ENCODE measurements at regions of chr20 and their contacts with region 1.

Region 1: DNA sequence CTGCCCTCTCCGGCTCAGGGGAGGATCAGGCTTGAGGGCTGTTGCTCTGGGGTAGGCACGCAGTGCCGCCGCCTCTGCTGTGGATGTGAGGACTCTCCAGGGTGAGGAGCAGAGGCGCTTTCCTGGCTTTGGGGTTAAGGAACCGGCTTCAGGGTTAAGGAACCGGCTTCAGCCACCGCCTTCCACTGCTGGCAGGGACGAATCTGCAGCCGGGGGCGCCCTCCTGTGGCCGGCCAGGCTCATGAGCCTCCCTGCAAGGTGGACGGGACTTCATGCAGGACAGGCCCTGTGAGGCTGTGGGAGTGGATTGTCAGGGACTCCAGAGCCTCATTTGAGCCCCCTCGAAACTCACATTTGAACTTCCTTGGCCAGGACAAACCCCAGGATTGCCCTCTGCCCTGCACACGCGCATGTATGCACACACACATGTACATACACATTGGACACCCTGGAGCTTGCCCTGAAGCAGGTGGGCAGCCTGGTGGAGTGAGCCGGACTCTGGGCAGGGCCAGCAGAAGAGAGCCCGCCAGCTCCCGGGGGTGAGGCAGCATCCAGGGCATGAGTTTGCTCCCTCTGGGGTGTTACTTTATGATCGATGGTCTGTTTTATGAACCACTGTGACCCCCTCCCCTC is 146.8 kb downstream of the PHACTR3 start:
- DNase-seq: peak; percentile 69 to 78 (median 74)
- ATAC-seq: peak; percentile 98
- H3K4me3 ChIP-seq: no peak overlapping the region
- H3K27ac ChIP-seq: no peak overlapping the region
- H3K4me1 ChIP-seq: peaks cover 0 to 4% of the 10 kb centered on the region in 2 experiments; a peak in 1 of 5 replicates
- H3K27me3 ChIP-seq: peaks cover 12 to 57% of the 10 kb centered on the region in 2 experiments
- CTCF ChIP-seq: peak; percentile 79 to 84 (median 82)
- EP300 ChIP-seq: no peak
- POLR2A ChIP-seq: no peak
- RAD21 ChIP-seq: peak; percentile 53 to 77

Region 2: DNA sequence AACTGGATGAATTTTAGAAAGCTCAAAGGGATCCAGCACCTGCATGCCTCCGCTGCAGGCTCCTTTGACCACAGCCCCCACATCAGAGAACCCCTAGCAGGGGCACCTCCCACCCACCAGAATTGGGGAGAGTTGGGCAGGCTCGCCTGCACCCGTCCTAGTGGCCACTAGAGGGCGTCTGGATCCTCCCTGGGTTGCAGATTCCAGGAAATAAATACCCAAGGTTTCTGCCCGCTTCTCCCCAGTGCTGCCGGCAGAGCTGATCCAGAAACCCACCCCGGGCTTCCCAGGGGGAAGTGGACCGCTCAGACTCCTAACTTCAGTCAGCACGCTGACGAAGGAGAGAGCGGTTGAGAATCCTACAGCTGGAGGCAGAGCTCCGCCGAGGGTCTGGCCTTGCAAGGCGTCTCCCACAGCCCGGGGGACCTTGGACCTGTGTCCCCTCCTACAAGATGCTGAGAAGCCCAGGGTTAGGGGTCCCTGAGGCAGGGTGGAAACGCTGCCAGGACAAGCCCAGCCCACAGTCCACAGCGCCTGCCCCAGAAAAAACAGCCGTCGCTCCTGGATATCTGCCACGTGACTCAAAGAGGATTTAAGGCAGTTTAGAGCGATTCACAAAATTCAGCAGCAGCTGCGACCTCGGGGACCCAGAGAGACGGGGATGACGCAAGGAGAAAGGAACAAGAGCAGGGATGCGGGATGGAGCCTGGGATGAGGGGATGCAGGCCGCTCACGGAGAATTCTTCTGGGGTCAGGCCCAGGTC is 179.4 kb before region 1 on chr20:
- CTCF ChIA-PET with region 1: interaction called, 8 read pairs
- POLR2A ChIA-PET with region 1: no interaction called
- in situ Hi-C with region 1: no loop called
- intact Hi-C with region 1: loop called (anchors 1 kb)
- DNase-seq: peak; percentile 59 to 83 (median 80)
- ATAC-seq: peak; percentile 92
- H3K4me3 ChIP-seq: no peak overlapping the region
- H3K27ac ChIP-seq: no peak overlapping the region
- H3K4me1 ChIP-seq: peaks cover 0 to 6% of the 10 kb centered on the region in 2 experiments; a peak in 2 of 5 replicates
- H3K27me3 ChIP-seq: peaks cover 4 to 15% of the 10 kb centered on the region in 2 experiments; a peak in 2 of 5 replicates
- CTCF ChIP-seq: peak; percentile 76 to 88 (median 77)
- EP300 ChIP-seq: no peak
- POLR2A ChIP-seq: no peak
- RAD21 ChIP-seq: peak in 1 of 2 experiments; percentile 52; a peak in 2 of 4 replicates

Region 3: GRCh38 chr20:59583428-59584045 is 167.6 kb before region 1 on chr20:
- CTCF ChIA-PET with region 1: no interaction called
- POLR2A ChIA-PET with region 1: no interaction called
- in situ Hi-C with region 1: loop called (anchors 5 kb)
- intact Hi-C with region 1: no loop called
- DNase-seq: no peak
- ATAC-seq: no peak
- H3K4me3 ChIP-seq: no peak overlapping the region
- H3K27ac ChIP-seq: no peak overlapping the region
- H3K4me1 ChIP-seq: no peaks in the 10 kb centered on the region
- H3K27me3 ChIP-seq: peaks cover 7 to 64% of the 10 kb centered on the region in 2 experiments; a peak in 4 of 5 replicates
- CTCF ChIP-seq: no peak
- EP300 ChIP-seq: no peak
- POLR2A ChIP-seq: no peak
- RAD21 ChIP-seq: no peak

Region 4: DNA sequence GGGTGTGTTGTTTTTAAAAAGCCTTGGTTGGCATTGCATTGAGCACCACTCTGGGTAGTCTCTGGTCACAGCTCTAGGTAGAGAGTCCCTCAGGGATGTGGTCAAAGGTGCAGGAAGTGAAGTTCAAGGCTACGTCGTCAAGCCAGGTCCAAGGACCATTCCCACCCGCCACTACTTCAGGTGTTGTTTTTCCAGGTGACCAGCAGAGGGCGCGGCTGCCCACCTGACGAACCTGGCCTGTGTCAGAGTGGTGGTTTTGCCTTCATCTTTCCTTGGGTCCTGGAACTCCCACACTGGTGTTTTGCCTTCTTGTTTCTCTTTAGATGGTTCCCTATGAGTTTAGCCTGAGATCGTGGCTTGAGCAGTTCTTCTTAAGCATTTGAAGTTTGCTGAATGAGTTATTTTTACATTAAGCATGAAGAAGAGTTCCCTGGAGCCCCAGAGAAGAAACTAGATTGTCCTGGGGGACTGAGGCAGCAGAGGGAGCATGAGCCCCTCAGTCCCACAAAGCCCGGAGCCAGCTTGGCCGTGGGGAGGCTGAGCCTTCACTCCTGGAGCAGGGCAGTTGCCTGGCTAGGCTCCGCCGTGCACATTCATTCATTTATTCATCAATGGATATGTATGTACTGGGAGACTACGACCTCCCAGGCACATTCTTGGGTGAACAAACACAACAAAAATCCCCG is 152.4 kb before region 1 on chr20:
- CTCF ChIA-PET with region 1: interaction called, 27 read pairs
- POLR2A ChIA-PET with region 1: no interaction called
- in situ Hi-C with region 1: no loop called
- intact Hi-C with region 1: loop called (anchors 1 kb)
- DNase-seq: peak; percentile 57 to 77 (median 76)
- ATAC-seq: peak; percentile 92
- H3K4me3 ChIP-seq: no peak overlapping the region
- H3K27ac ChIP-seq: no peak overlapping the region
- H3K4me1 ChIP-seq: no peaks in the 10 kb centered on the region
- H3K27me3 ChIP-seq: 0 out of 5 replicates have a peak, but pooled peaks cover 0 to 4% of the 10 kb centered on the region in 2 experiments
- CTCF ChIP-seq: peak; percentile 75 to 92 (median 86)
- EP300 ChIP-seq: no peak
- POLR2A ChIP-seq: no peak
- RAD21 ChIP-seq: peak; percentile 51 to 78; a peak in 3 of 4 replicates

Region 5: GRCh38 chr20:60541991-60542390 is 790.8 kb after region 1 on chr20:
- CTCF ChIA-PET with region 1: no interaction called
- POLR2A ChIA-PET with region 1: no interaction called
- in situ Hi-C with region 1: no loop called
- intact Hi-C with region 1: no loop called
- DNase-seq: no peak
- ATAC-seq: no peak
- H3K4me3 ChIP-seq: no peak overlapping the region
- H3K27ac ChIP-seq: no peak overlapping the region
- H3K4me1 ChIP-seq: no peaks in the 10 kb centered on the region
- H3K27me3 ChIP-seq: no peaks in the 10 kb centered on the region
- CTCF ChIP-seq: no peak
- EP300 ChIP-seq: no peak
- POLR2A ChIP-seq: no peak
- RAD21 ChIP-seq: no peak

Measured in K562 (cell line).